ENCODE measurements at regions of chr19 and their contacts with region 1.

Region 1: GRCh38 chr19:41449079-41449864 is 6.3 kb downstream of the ERICH4 start:
- DNase-seq: peak; percentile 84
- ATAC-seq: peak; percentile 89

Region 2: DNA sequence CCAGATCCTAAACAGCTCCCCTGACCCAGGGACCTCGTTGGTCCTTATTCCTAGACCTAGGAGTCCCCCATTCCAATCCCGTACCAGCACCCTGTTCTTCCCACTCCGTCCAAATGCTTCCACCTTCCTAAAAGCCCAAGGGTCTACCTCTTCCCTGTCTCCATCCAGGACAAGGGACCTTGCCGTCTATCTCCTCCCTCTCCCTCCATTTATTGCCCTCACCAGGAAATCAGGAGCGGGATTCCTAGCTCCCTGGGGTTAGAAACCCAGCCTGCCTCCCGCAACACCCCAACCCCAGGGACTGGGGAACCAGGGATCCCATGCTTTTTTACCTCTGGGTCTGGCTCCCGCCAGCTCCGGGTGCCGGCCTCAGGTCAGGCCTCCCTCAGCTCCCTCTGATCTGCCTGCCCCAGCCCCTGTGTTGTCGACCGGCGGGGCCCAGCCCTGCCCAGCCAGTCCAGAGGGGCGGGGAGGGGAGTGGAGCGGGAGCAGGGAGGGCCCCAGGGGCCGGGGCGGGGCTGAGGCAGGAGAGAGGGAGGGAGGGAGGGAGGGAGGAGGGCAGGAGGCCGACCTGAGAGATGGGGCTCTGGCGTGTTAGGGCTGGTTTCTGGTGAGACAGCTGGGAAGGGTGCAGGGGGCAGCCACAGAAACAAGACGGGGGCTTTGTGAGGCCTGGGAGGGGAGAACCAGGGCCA is 22.2 kb before region 1 on chr19 and contains the start of gene B3GNT8:
- intact Hi-C with region 1: no loop called
- DNase-seq: peak; percentile 95
- ATAC-seq: peak; percentile 90
- total RNA-seq, gene B3GNT8: 8.3 TPM

Region 3: DNA sequence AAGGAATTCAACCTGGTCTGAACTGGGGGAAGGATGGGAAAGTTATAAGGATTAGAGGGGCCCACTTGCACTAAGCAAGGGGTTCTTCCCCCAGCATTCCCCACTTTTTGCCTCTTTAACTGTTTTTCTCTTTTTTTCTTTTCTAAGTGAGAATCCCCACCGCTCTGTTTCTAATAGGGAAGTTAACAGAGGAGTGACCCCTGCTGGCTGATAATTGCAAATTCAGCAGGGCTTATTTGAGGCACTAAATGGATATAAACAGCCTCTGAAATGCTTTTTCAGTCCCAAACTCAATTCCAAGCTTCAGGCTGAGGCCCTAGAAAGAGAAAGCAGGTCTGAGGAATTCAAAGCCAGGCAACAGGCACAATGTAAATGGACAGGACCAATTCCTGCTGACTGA is 88.5 kb after region 1 on chr19:
- intact Hi-C with region 1: loop called (anchors 2 kb)
- DNase-seq: no peak
- ATAC-seq: no peak

Region 4: GRCh38 chr19:41570639-41571112 is 121.4 kb after region 1 on chr19:
- intact Hi-C with region 1: loop called (anchors 2 kb)
- DNase-seq: peak; percentile 93
- ATAC-seq: peak; percentile 84

Region 5: DNA sequence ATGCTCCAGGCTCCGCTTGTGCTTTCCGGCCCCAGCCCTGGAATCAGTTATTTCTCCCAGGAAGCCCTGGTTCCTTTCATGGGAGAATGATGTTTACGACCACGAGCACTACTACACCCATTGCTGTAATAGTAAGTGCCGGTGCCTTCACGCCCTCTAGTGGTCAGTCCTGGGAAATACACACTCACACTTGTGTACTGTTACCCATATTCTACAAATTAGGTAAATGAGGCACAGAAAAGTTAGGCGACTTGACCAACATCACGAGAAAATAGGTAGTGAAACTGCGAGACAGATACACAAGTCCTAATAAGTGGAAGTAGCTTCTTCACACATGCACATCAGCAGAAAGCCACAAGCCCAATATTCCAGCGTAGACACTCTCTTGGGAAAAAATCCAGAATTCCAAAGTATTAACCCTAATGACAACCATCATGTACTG is 148.3 kb after region 1 on chr19:
- intact Hi-C with region 1: no loop called
- DNase-seq: peak; percentile 80
- ATAC-seq: peak; percentile 68